ENCODE measurements at regions of chrX and their contacts with region 1.

Region 1: GRCh38 chrX:82218361-82218760 is 1016.5 kb downstream of the SH3BGRL start:
- DNase-seq: peak; percentile 52
- H3K4me3 ChIP-seq: no peak overlapping the region
- H3K27ac ChIP-seq: no peak overlapping the region
- H3K4me1 ChIP-seq: no peaks in the 10 kb centered on the region
- H3K27me3 ChIP-seq: no peaks in the 10 kb centered on the region
- CTCF ChIP-seq: peak; percentile 53

Region 2: GRCh38 chrX:82362550-82362949 is 144.2 kb after region 1 on chrX:
- CTCF ChIA-PET with region 1: no interaction called
- POLR2A ChIA-PET with region 1: no interaction called
- intact Hi-C with region 1: no loop called
- DNase-seq: no peak
- H3K4me3 ChIP-seq: no peak overlapping the region
- H3K27ac ChIP-seq: no peak overlapping the region
- H3K4me1 ChIP-seq: no peaks in the 10 kb centered on the region
- H3K27me3 ChIP-seq: no peaks in the 10 kb centered on the region
- CTCF ChIP-seq: no peak

Region 3: GRCh38 chrX:83630662-83631061 is 1412.3 kb after region 1 on chrX:
- CTCF ChIA-PET with region 1: no interaction called
- POLR2A ChIA-PET with region 1: no interaction called
- intact Hi-C with region 1: loop called (anchors 5 kb)
- DNase-seq: no peak
- H3K4me3 ChIP-seq: no peak overlapping the region
- H3K27ac ChIP-seq: no peak overlapping the region
- H3K4me1 ChIP-seq: no peaks in the 10 kb centered on the region
- H3K27me3 ChIP-seq: no peaks in the 10 kb centered on the region
- CTCF ChIP-seq: no peak